MCF 10A (cell line): ENCODE measurements at regions of chr11 and their contacts with region 1.

Region 1: DNA sequence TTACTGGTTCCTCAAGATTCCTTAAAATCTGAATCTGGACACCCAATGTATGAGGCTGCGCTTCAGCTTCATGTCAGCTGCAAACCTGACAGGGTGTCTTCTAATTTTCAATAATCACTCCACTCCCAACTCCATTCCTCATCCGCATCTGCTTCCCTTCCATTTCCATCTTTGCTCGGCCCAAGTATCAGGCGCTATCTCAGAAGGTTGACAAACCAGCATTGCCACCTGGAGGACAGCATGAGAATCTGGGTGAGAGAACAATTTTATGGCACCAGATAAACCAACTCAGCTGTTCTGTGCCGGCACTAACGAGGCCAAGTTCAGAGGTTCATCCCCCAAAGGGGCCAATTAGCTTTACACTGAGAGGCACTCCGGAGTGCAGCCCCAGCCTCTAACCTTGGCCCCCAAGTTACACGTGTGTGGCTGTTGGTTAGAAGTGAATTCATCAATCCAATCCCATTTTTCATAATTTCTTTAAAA is 79.1 kb upstream of the LMO2 start:
- DNase-seq: peak; percentile 66
- H3K4me3 Mint-ChIP-seq: no peak overlapping the region
- H3K27ac Mint-ChIP-seq: no peak overlapping the region
- H3K4me1 Mint-ChIP-seq: no peaks in the 10 kb centered on the region
- H3K27me3 Mint-ChIP-seq: no peaks in the 10 kb centered on the region
- CTCF ChIP-seq: peak; percentile 55

Region 2: DNA sequence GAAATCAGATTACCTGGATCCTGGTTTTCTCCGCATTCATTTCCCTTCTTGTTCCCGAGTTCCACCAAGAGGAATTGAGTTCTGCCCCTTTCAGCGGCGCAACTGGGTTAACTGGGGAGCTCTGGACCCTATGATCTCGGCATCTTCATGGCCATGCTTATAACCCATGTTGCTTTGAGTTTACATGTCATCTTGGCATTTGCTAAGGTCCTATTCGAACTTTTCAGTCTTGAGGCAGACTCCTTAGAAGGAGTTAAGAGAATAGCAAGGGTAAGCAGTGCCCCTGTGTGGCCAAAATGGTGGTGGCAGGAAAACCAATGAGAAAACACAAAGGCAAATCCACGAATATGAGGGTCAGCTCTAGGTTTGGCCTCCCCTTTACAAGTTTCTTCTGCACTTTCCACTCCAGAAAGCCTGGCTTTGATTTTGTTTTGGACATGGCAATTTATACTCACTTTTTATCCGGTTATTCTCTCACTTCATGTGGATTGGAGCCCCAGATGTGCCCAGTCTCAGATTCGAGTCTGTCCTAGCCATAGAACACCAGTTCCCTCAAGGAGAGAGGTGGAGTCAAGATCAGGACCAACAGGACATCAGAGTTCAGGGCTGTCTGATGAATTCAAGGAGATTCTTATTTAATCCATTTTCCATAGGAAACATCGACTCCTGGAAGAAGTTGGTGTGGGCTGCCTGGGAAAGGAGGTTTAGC is 141.4 kb before region 1 on chr11:
- CTCF ChIA-PET with region 1: interaction called, 27 read pairs
- POLR2A ChIA-PET with region 1: interaction called, 3 read pairs
- intact Hi-C with region 1: no loop called
- DNase-seq: peak; percentile 77
- H3K4me3 Mint-ChIP-seq: peak overlapping the region; percentile 62
- H3K27ac Mint-ChIP-seq: peak overlapping the region; percentile 42
- H3K4me1 Mint-ChIP-seq: peaks cover 6% of the 10 kb centered on the region
- H3K27me3 Mint-ChIP-seq: peaks cover 15% of the 10 kb centered on the region
- CTCF ChIP-seq: peak; percentile 82

Region 3: GRCh38 chr11:33848717-33849390 is 122.2 kb before region 1 on chr11:
- CTCF ChIA-PET with region 1: interaction called, 53 read pairs
- POLR2A ChIA-PET with region 1: no interaction called
- intact Hi-C with region 1: no loop called
- DNase-seq: no peak
- H3K4me3 Mint-ChIP-seq: no peak overlapping the region
- H3K27ac Mint-ChIP-seq: no peak overlapping the region
- H3K4me1 Mint-ChIP-seq: no peaks in the 10 kb centered on the region
- H3K27me3 Mint-ChIP-seq: peaks cover 82% of the 10 kb centered on the region
- CTCF ChIP-seq: no peak

Region 4: GRCh38 chr11:33869481-33870422 is 101.3 kb before region 1 on chr11:
- CTCF ChIA-PET with region 1: interaction called, 27 read pairs
- POLR2A ChIA-PET with region 1: interaction called, 4 read pairs
- intact Hi-C with region 1: no loop called
- DNase-seq: peak; percentile 33
- H3K4me3 Mint-ChIP-seq: peak overlapping the region; percentile 86
- H3K27ac Mint-ChIP-seq: no peak overlapping the region
- H3K4me1 Mint-ChIP-seq: no peaks in the 10 kb centered on the region
- H3K27me3 Mint-ChIP-seq: no peaks in the 10 kb centered on the region
- CTCF ChIP-seq: no peak

Region 5: DNA sequence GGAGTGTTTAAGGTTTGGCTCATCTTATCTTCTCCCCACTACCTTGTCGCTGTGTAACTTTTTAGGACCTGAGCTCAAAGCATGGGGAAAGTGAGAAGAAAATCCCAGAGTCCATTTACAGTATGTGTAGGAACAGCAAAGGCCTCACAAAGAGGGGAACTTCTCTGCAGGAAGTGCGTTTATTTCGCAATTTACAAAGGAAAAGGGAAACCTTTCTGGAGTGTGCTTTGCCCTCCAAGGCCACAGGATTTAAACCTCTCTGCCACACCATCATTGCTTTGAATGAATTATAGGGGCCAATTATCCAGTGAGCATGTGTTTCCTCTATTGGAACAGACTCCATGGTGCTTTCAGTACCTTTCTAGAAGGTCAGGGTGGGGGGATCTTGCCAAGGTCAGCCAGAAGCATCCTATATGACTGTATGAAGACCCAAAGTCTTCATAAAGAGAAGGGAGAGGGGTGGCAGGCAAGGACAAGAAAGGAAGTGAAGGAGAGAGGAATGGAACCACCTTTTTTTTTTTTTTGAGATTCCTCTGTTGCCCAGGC is 11.1 kb before region 1 on chr11:
- CTCF ChIA-PET with region 1: interaction called, 10 read pairs
- POLR2A ChIA-PET with region 1: interaction called, 4 read pairs
- intact Hi-C with region 1: no loop called
- DNase-seq: no peak
- H3K4me3 Mint-ChIP-seq: no peak overlapping the region
- H3K27ac Mint-ChIP-seq: no peak overlapping the region
- H3K4me1 Mint-ChIP-seq: no peaks in the 10 kb centered on the region
- H3K27me3 Mint-ChIP-seq: no peaks in the 10 kb centered on the region
- CTCF ChIP-seq: no peak